Body of pancreas (tissue), 4 donors: ENCODE measurements at regions of chr3 and their contacts with region 1.

Region 1: GRCh38 chr3:149115114-149115513 is 14.3 kb upstream of the HPS3 start:
- DNase-seq: no peak
- ATAC-seq: no peak
- H3K4me3 ChIP-seq: no peak overlapping the region
- H3K27ac ChIP-seq: no peak overlapping the region
- H3K4me1 ChIP-seq: no peaks in the 10 kb centered on the region
- H3K27me3 ChIP-seq: no peaks in the 10 kb centered on the region
- CTCF ChIP-seq: no peak
- POLR2A ChIP-seq: no peak

Region 2: GRCh38 chr3:149216193-149216869 is 101.2 kb after region 1 on chr3:
- intact Hi-C with region 1: no loop called
- DNase-seq: no peak
- ATAC-seq: no peak
- H3K4me3 ChIP-seq: no peak overlapping the region
- H3K27ac ChIP-seq: no peak overlapping the region
- H3K4me1 ChIP-seq: peaks cover 2% of the 10 kb centered on the region
- H3K27me3 ChIP-seq: no peaks in the 10 kb centered on the region
- CTCF ChIP-seq: no peak
- POLR2A ChIP-seq: no peak

Region 3: DNA sequence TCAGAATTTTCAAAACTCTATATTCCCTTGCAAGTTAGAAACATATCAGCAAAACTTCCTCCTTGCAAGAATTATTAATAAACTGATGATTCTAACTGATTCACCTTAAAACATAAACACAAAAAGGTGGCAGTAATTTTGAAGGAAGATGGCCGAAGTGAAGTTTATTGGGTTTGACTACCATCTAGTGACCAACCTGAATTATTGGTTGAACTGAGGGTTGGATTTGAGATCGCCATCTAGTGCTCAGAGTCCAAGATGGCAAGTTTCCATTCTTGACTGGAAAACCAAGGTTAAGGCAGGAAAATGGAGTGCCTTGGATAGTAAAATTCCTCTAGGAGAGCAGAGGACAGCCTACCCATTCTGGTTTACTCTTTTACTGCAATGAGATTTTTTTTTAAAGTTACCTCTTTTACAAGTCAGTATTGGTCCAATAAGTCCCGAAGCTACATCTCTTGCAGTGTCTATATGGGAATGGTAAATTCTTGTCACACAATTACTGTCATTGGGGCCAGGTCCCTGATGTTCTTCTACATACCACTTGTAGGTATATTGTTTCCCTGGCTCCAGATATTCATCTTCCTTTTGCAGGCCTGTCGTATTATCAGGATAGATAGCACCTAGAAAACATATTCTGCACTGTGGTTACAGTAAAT is 158.1 kb after region 1 on chr3:
- intact Hi-C with region 1: loop called (anchors 5 kb)
- DNase-seq: peak; percentile 60 to 72 (median 63)
- ATAC-seq: peak; percentile 94
- H3K4me3 ChIP-seq: no peak overlapping the region
- H3K27ac ChIP-seq: no peak overlapping the region
- H3K4me1 ChIP-seq: peaks cover 15% of the 10 kb centered on the region
- H3K27me3 ChIP-seq: no peaks in the 10 kb centered on the region
- CTCF ChIP-seq: peak; percentile 78 to 99 (median 99)
- POLR2A ChIP-seq: no peak